Heart right ventricle (tissue), 16 donors: ENCODE measurements at regions of chrX and their contacts with region 1.

Region 1: DNA sequence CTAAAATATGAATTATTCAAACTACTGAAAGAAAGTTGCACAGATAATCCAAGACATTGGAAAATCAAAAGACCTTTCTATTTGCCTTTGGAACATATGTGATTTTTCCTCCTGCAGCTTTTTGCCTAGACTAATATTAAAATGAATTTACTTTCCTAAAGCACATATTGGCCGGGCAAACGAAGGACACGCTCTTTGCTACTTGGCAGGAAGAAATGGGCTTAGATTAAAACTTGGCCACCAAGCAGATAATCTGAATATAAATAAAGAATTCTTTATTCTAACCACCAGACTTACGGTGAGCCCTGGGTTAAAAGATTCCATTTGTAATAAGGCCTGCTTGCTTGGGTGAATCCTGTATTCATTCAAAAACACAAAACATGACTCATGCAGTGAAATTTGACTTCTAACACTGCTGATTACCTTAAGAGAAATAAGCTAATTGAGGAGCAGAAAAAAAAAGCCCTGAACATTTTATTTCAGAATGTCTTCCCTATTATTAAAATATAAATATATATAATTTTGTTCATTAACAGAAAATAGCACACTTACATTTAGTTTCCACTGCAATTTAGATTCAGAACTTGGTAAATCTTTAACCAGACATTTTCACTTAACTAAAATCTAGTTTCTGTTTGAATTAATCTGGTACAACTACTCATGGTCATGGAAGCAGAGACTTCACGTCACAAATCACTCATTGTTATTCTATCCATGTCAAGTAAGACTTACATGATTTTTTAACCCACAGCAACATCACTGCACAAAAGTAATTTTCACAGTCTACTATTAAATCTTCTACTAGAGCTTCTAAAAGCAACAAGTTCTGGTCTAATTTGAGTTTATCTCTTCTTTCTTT is 116.1 kb upstream of the PLAC1 start:
- DNase-seq: no peak
- ATAC-seq: no peak
- H3K4me3 ChIP-seq: no peak overlapping the region
- H3K27ac ChIP-seq: no peak overlapping the region
- H3K4me1 ChIP-seq: no peaks in the 10 kb centered on the region
- H3K27me3 ChIP-seq: peaks cover 0 to 13% (median 0%) of the 10 kb centered on the region in 7 donors
- CTCF ChIP-seq: no peak

Region 2: GRCh38 chrX:134423615-134424014 is 350.8 kb before region 1 on chrX:
- intact Hi-C with region 1: loop called in 1 of 10 experiments (anchors 5 kb)
- DNase-seq: no peak
- ATAC-seq: no peak
- H3K4me3 ChIP-seq: no peak overlapping the region
- H3K27ac ChIP-seq: no peak overlapping the region
- H3K4me1 ChIP-seq: no peaks in the 10 kb centered on the region
- H3K27me3 ChIP-seq: peaks cover 0 to 14% (median 0%) of the 10 kb centered on the region in 7 donors
- CTCF ChIP-seq: peak in 6 of 9 donors; percentile 12 to 43 (median 22)

Region 3: DNA sequence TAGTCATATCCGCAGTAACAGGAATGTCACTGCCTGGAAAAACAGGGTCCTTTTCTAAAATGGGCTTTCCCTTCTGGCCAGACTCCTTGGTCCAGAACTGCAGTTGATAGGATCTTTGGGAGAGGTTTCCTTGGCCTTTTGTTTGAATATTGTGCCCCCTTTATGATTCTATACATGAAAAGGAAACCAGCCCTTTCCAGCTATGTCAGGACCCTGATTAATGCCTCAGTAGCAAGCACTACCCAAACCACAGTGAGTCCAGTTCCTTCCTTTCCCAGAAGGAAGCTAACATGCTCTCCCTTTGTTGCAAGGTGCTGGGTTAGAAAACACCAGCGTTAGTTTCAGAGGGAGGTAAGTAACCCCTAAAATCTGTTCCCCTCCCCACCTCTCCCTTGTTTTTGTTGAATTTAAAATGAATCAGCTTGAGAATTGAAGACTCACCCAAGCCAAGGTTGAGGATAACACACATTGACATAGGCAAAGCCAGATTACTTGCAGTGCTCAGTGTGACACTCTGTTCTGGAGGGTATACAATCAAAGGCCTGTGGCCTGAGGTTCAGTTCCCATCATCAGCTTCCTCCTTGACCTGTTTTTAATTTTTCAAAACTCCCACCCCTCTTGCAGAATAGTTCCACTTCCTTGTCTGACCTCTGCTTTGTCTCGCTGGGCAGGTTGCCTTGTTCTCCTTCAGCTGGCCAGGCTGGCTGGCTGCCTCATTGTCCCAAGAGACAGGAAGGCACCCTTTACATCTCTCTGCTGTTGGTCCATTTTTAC is 28.6 kb before region 1 on chrX:
- intact Hi-C with region 1: no loop called
- DNase-seq: no peak
- ATAC-seq: no peak
- H3K4me3 ChIP-seq: no peak overlapping the region
- H3K27ac ChIP-seq: no peak overlapping the region
- H3K4me1 ChIP-seq: peaks cover 0 to 4% (median 0%) of the 10 kb centered on the region in 9 donors
- H3K27me3 ChIP-seq: peaks cover 0 to 21% (median 0%) of the 10 kb centered on the region in 7 donors
- CTCF ChIP-seq: no peak